Activated CD4-positive, alpha-beta memory T cell treated with anti-CD3 and anti-CD28 coated beads, Interleukin-2, amount 10 ng/mL, durations not matched to agents 7 days and 5 days (primary cell): ENCODE measurements at regions of chr3 and their contacts with region 1.

Region 1: GRCh38 chr3:141370065-141370533 is 1.8 kb downstream of the ZBTB38 start:
- DNase-seq: peak; percentile 65
- H3K4me3 Mint-ChIP-seq: no peak overlapping the region
- H3K27ac Mint-ChIP-seq: no peak overlapping the region
- H3K4me1 Mint-ChIP-seq: peaks cover 38% of the 10 kb centered on the region
- H3K27me3 Mint-ChIP-seq: no peaks in the 10 kb centered on the region

Region 2: DNA sequence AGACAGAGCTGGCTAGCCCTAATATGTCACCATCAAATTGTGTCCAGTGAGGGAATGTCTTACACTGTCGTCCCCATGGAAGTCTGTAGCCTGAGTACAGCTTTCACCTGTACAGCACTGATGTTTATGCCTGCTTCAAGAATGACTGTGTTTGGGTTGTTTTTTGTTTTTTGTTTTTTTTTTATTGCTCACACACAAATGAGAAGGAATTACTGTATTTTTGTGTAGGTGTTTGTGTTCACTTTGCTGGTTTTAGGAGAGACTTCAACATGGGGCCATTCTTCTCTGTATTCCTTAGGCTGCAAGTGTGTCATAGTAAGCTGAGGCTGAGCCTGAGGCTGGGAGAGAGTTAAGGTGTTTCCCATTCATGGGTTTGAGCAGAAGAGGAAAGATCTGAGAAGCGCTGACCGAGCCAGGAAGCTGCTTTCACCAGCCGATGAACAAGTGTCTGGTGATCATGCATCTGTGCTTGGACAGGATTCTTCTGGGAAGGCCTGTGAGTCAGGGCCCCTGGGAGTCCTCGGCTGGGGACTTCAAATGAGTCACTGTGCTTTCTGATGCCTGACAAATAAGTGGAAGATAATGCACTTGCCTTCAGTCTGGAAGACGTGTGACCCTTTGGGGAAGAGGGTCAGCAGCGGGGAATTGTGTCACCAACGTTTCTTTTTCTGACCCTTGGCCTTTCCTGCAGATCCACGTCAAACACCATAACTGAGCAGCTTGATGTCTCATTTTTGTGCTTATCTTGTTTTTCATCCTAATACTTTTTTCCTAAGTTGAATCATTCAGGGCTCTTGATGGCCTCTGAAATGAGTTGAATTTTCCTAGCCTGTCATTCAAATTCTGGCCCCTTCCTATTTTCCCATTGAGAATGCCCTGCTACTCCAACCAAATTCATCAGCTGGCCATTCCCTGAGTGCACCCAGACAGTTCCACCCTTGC is 38.5 kb before region 1 on chr3:
- CTCF ChIA-PET with region 1: no interaction called
- POLR2A ChIA-PET with region 1: no interaction called
- DNase-seq: no peak
- H3K4me3 Mint-ChIP-seq: no peak overlapping the region
- H3K27ac Mint-ChIP-seq: no peak overlapping the region
- H3K4me1 Mint-ChIP-seq: peaks cover 7% of the 10 kb centered on the region
- H3K27me3 Mint-ChIP-seq: no peaks in the 10 kb centered on the region

Region 3: DNA sequence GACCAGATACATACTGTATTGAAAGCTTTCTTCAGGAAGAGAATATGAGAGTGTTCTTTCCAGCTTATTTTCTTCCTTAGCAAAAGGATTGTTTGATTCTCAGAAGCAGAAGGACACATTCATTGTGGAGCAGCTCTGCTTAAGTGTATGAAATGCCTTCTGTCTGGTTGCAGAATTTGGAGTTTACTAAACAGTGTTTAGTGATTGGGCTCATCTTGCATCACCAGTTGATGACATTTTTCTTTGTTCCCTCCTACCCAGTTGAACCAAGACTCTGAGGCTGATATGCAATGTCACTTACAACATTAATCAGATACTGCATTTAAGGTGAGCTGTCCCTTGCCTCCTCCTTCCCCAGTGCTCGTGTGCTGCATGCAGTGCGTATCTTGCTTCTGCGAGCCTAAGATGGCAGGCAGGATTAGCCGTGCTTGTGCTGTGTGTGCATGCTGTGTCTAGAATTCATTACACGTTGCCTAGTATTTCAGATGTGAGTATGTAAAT is 16.6 kb after region 1 on chr3:
- CTCF ChIA-PET with region 1: interaction called, 4 read pairs
- POLR2A ChIA-PET with region 1: interaction called, 60 read pairs
- DNase-seq: no peak
- H3K4me3 Mint-ChIP-seq: peak overlapping the region; percentile 63
- H3K27ac Mint-ChIP-seq: peak overlapping the region; percentile 65
- H3K4me1 Mint-ChIP-seq: peaks cover 37% of the 10 kb centered on the region
- H3K27me3 Mint-ChIP-seq: no peaks in the 10 kb centered on the region